Endothelial cell of umbilical vein (primary cell): ENCODE measurements at regions of chr7 and their contacts with region 1.

Region 1: GRCh38 chr7:74026903-74027551 is 946 bp upstream of the ELN start:
- DNase-seq: peak; percentile 72
- H3K4me3 ChIP-seq: no peak overlapping the region
- H3K27ac ChIP-seq: no peak overlapping the region
- H3K4me1 ChIP-seq: peaks cover 19% of the 10 kb centered on the region
- H3K27me3 ChIP-seq: peaks cover 11 to 17% of the 10 kb centered on the region in 2 experiments
- CTCF ChIP-seq: peak; percentile 91 to 95
- POLR2A ChIP-seq: no peak

Region 2: GRCh38 chr7:73811760-73812168 is 215.3 kb before region 1 on chr7:
- CTCF ChIA-PET with region 1: interaction called, 5 read pairs
- POLR2A ChIA-PET with region 1: no interaction called
- dilution Hi-C with region 1: no loop called
- intact Hi-C with region 1: loop called (anchors 5 kb)
- DNase-seq: peak; percentile 59
- H3K4me3 ChIP-seq: no peak overlapping the region
- H3K27ac ChIP-seq: no peak overlapping the region
- H3K4me1 ChIP-seq: no peaks in the 10 kb centered on the region
- H3K27me3 ChIP-seq: no peaks in the 10 kb centered on the region
- CTCF ChIP-seq: peak; percentile 82 to 85
- POLR2A ChIP-seq: no peak

Region 3: GRCh38 chr7:73885975-73886798 is 140.8 kb before region 1 on chr7:
- CTCF ChIA-PET with region 1: interaction called, 33 read pairs
- POLR2A ChIA-PET with region 1: no interaction called
- dilution Hi-C with region 1: no loop called
- intact Hi-C with region 1: loop called (anchors 5 kb)
- DNase-seq: peak; percentile 96
- H3K4me3 ChIP-seq: no peak overlapping the region
- H3K27ac ChIP-seq: peak overlapping the region; percentile 57
- H3K4me1 ChIP-seq: peaks cover 15% of the 10 kb centered on the region
- H3K27me3 ChIP-seq: peaks cover 2 to 16% of the 10 kb centered on the region in 2 experiments
- CTCF ChIP-seq: no peak
- POLR2A ChIP-seq: peak; percentile 14

Region 4: DNA sequence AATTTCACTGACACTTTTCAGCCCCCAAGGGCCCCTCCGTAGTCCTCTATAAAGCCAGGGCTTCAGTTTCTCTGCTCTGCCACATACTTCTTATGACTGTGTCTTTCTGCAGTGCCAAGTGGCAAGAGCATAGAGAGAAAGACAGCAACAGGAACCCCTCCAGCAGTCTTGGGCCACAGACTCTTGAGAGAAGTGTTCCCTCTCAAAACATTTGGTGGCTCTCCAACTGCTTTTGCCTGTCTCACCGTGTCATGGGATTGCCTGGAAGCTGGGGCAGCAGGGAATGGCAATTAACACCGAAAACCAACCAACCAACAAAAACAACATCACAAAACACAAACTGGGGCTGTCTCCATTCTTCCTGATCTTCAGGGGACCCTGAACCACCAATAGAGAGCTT is 72.8 kb before region 1 on chr7:
- CTCF ChIA-PET with region 1: interaction called, 10 read pairs
- POLR2A ChIA-PET with region 1: no interaction called
- dilution Hi-C with region 1: no loop called
- intact Hi-C with region 1: no loop called
- DNase-seq: no peak
- H3K4me3 ChIP-seq: no peak overlapping the region
- H3K27ac ChIP-seq: no peak overlapping the region
- H3K4me1 ChIP-seq: peaks cover 2% of the 10 kb centered on the region
- H3K27me3 ChIP-seq: no peaks in the 10 kb centered on the region
- CTCF ChIP-seq: no peak
- POLR2A ChIP-seq: no peak

Region 5: GRCh38 chr7:73986158-73986631 is 40.8 kb before region 1 on chr7:
- CTCF ChIA-PET with region 1: interaction called, 23 read pairs
- POLR2A ChIA-PET with region 1: no interaction called
- dilution Hi-C with region 1: no loop called
- intact Hi-C with region 1: loop called (anchors 5 kb)
- DNase-seq: no peak
- H3K4me3 ChIP-seq: no peak overlapping the region
- H3K27ac ChIP-seq: no peak overlapping the region
- H3K4me1 ChIP-seq: no peaks in the 10 kb centered on the region
- H3K27me3 ChIP-seq: no peaks in the 10 kb centered on the region
- CTCF ChIP-seq: no peak
- POLR2A ChIP-seq: no peak

Region 6: GRCh38 chr7:74043523-74043951 is 16.5 kb after region 1 on chr7:
- CTCF ChIA-PET with region 1: interaction called, 74 read pairs
- POLR2A ChIA-PET with region 1: no interaction called
- dilution Hi-C with region 1: no loop called
- intact Hi-C with region 1: no loop called
- DNase-seq: no peak
- H3K4me3 ChIP-seq: no peak overlapping the region
- H3K27ac ChIP-seq: no peak overlapping the region
- H3K4me1 ChIP-seq: no peaks in the 10 kb centered on the region
- H3K27me3 ChIP-seq: peaks cover 0 to 2% of the 10 kb centered on the region in 2 experiments
- CTCF ChIP-seq: no peak
- POLR2A ChIP-seq: no peak

Region 7: GRCh38 chr7:74212656-74213055 is 185.6 kb after region 1 on chr7:
- CTCF ChIA-PET with region 1: no interaction called
- POLR2A ChIA-PET with region 1: no interaction called
- dilution Hi-C with region 1: no loop called
- intact Hi-C with region 1: no loop called
- DNase-seq: no peak
- H3K4me3 ChIP-seq: no peak overlapping the region
- H3K27ac ChIP-seq: no peak overlapping the region
- H3K4me1 ChIP-seq: no peaks in the 10 kb centered on the region
- H3K27me3 ChIP-seq: no peaks in the 10 kb centered on the region
- CTCF ChIP-seq: no peak
- POLR2A ChIP-seq: no peak